ENCODE measurements at regions of chr4 and their contacts with region 1.

Region 1: GRCh38 chr4:92969650-92970370 is 666.0 kb downstream of the GRID2 start:
- DNase-seq: no peak
- ATAC-seq: peak; percentile 97

Region 2: GRCh38 chr4:91267543-91267942 is 1702.3 kb before region 1 on chr4:
- intact Hi-C with region 1: loop called (anchors 5 kb)
- DNase-seq: no peak
- ATAC-seq: no peak

Region 3: GRCh38 chr4:92814677-92815076 is 155.1 kb before region 1 on chr4:
- intact Hi-C with region 1: no loop called
- DNase-seq: no peak
- ATAC-seq: no peak

Measured in sciatic nerve (tissue), 2 donors.